ENCODE measurements at regions of chr11 and their contacts with region 1.

Region 1: GRCh38 chr11:102495161-102496042 is 35.1 kb downstream of the MMP7 start:
- DNase-seq: peak in 10 of 14 experiments; percentile 6 to 90 (median 28)
- ATAC-seq: peak; percentile 89
- H3K4me3 ChIP-seq: no peak overlapping the region
- H3K4me3 Mint-ChIP-seq: no peak overlapping the region
- H3K27ac ChIP-seq: no peak overlapping the region
- H3K27ac Mint-ChIP-seq: no peak overlapping the region
- H3K4me1 ChIP-seq: peaks cover 3% of the 10 kb centered on the region
- H3K4me1 Mint-ChIP-seq: peaks cover 7% of the 10 kb centered on the region
- H3K27me3 ChIP-seq: no peaks in the 10 kb centered on the region
- H3K27me3 Mint-ChIP-seq: peaks cover 6% of the 10 kb centered on the region
- CTCF ChIP-seq: peak; percentile 77

Region 2: GRCh38 chr11:102287964-102288724 is 207.3 kb before region 1 on chr11:
- CTCF ChIA-PET with region 1: interaction called, 5 read pairs
- POLR2A ChIA-PET with region 1: no interaction called
- intact Hi-C with region 1: loop called (anchors 1 to 5 kb)
- DNase-seq: peak in 8 of 14 experiments; percentile 4 to 86 (median 35)
- ATAC-seq: peak; percentile 89
- H3K4me3 ChIP-seq: no peak overlapping the region
- H3K4me3 Mint-ChIP-seq: peak overlapping the region; percentile 50
- H3K27ac ChIP-seq: no peak overlapping the region
- H3K27ac Mint-ChIP-seq: no peak overlapping the region
- H3K4me1 ChIP-seq: peaks cover 9% of the 10 kb centered on the region
- H3K4me1 Mint-ChIP-seq: peaks cover 24% of the 10 kb centered on the region
- H3K27me3 ChIP-seq: no peaks in the 10 kb centered on the region
- H3K27me3 Mint-ChIP-seq: no peaks in the 10 kb centered on the region
- CTCF ChIP-seq: peak; percentile 73

Region 3: DNA sequence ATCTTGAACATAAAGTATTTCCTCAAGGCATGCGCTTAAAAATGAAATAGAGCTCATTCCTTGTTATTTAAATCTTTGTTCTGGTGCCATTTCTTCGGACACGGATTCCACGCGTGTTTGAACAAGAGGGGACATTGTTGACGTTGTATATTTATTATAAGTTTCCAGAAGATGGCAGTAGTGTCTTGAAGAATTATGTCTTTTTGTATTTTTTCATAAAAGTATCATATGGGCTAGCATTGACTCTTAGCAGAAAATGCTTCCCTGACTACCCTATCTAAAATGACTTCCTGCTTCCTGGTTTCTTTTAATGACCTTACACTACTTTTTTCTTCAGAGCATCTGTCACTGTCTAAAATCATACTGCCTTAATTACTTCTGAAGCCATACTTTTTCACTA is 128.0 kb before region 1 on chr11:
- CTCF ChIA-PET with region 1: interaction called, 5 read pairs
- POLR2A ChIA-PET with region 1: interaction called, 5 read pairs
- intact Hi-C with region 1: loop called (anchors 1 kb)
- DNase-seq: peak in 3 of 14 experiments; percentile 56 to 64 (median 60)
- ATAC-seq: peak; percentile 78
- H3K4me3 ChIP-seq: no peak overlapping the region
- H3K4me3 Mint-ChIP-seq: no peak overlapping the region
- H3K27ac ChIP-seq: no peak overlapping the region
- H3K27ac Mint-ChIP-seq: peak overlapping the region; percentile 75
- H3K4me1 ChIP-seq: no peaks in the 10 kb centered on the region
- H3K4me1 Mint-ChIP-seq: peaks cover 34% of the 10 kb centered on the region
- H3K27me3 ChIP-seq: no peaks in the 10 kb centered on the region
- H3K27me3 Mint-ChIP-seq: no peaks in the 10 kb centered on the region
- CTCF ChIP-seq: peak; percentile 59

Region 4: DNA sequence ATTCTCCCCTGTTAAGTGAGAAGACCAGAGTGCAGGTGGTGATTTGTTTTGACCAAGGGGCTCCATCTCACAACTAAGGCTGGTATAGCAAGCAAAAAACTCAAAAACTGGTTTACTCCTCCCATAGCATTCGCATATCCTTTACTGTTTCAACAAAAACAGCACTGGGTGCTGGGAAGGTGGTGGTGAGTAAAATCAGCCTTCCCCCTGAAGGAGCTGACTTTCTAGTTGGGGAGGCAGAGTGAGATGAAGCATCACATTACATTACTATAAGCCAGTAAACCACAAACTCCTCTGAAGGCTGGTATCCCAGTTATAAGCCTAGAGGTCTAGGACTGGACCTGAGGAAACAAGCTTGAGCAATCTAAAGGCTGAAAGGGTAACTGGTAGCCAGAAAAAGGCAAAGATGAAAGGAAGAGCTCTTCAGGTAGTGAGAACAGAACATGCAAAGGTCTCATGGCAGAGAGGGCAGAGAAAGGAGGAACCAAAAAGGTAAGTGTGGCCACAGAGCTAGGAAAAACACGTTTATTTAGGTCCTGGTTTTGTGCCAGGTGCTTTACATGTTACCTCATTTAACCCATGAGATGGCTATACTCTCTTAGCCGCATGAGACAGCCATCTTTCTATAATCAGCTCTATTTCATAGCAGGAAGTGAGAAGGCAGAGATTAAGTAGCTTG is 65.1 kb before region 1 on chr11:
- CTCF ChIA-PET with region 1: no interaction called
- POLR2A ChIA-PET with region 1: no interaction called
- intact Hi-C with region 1: loop called in 1 of 2 experiments (anchors 2 kb)
- DNase-seq: peak in 2 of 14 experiments; percentile 51 to 56
- ATAC-seq: peak; percentile 58
- H3K4me3 ChIP-seq: no peak overlapping the region
- H3K4me3 Mint-ChIP-seq: peak overlapping the region; percentile 11
- H3K27ac ChIP-seq: peak overlapping the region; percentile 48 to 53
- H3K27ac Mint-ChIP-seq: peak overlapping the region; percentile 76
- H3K4me1 ChIP-seq: peaks cover 40% of the 10 kb centered on the region
- H3K4me1 Mint-ChIP-seq: peaks cover 76% of the 10 kb centered on the region
- H3K27me3 ChIP-seq: no peaks in the 10 kb centered on the region
- H3K27me3 Mint-ChIP-seq: no peaks in the 10 kb centered on the region
- CTCF ChIP-seq: no peak

Region 5: GRCh38 chr11:102666331-102666957 is 171.0 kb after region 1 on chr11:
- CTCF ChIA-PET with region 1: no interaction called
- POLR2A ChIA-PET with region 1: no interaction called
- intact Hi-C with region 1: loop called in 1 of 2 experiments (anchors 5 kb)
- DNase-seq: peak in 5 of 14 experiments; percentile 2 to 57 (median 45)
- ATAC-seq: peak; percentile 55
- H3K4me3 ChIP-seq: no peak overlapping the region
- H3K4me3 Mint-ChIP-seq: no peak overlapping the region
- H3K27ac ChIP-seq: no peak overlapping the region
- H3K27ac Mint-ChIP-seq: no peak overlapping the region
- H3K4me1 ChIP-seq: no peaks in the 10 kb centered on the region
- H3K4me1 Mint-ChIP-seq: no peaks in the 10 kb centered on the region
- H3K27me3 ChIP-seq: no peaks in the 10 kb centered on the region
- H3K27me3 Mint-ChIP-seq: peaks cover 9% of the 10 kb centered on the region
- CTCF ChIP-seq: peak; percentile 86

Region 6: GRCh38 chr11:102716527-102716926 is 221.1 kb after region 1 on chr11:
- CTCF ChIA-PET with region 1: no interaction called
- POLR2A ChIA-PET with region 1: no interaction called
- intact Hi-C with region 1: no loop called
- DNase-seq: no peak
- ATAC-seq: no peak
- H3K4me3 ChIP-seq: no peak overlapping the region
- H3K4me3 Mint-ChIP-seq: no peak overlapping the region
- H3K27ac ChIP-seq: no peak overlapping the region
- H3K27ac Mint-ChIP-seq: no peak overlapping the region
- H3K4me1 ChIP-seq: no peaks in the 10 kb centered on the region
- H3K4me1 Mint-ChIP-seq: no peaks in the 10 kb centered on the region
- H3K27me3 ChIP-seq: no peaks in the 10 kb centered on the region
- H3K27me3 Mint-ChIP-seq: peaks cover 43% of the 10 kb centered on the region
- CTCF ChIP-seq: no peak

Measured in CD4-positive, alpha-beta T cell (primary cell).